ENCODE measurements at regions of chr3 and their contacts with region 1.

Region 1: DNA sequence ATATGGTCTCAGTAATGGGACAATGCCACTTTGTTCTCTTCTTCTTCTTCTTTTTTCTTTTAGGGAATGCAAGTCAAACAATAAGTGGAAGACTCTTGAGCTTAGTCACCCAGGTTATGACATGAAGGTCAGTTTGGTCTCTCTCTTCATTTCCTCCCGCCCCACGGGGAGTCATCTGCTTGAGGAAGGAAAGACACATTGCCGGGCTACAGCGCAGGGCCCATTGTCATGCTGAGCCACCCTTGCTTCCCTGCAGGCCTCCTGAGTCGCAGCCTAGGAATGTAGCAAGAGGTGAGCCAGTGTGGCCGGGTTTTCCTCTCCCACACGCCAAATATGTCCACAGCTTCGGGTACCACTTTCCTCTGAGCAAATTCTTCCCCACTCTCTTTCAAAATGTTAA is 47.6 kb downstream of the RAP2B start:
- H3K4me3 Mint-ChIP-seq: no peak overlapping the region
- H3K27ac Mint-ChIP-seq: peak overlapping the region; percentile 33
- H3K4me1 Mint-ChIP-seq: peaks cover 26% of the 10 kb centered on the region
- H3K27me3 Mint-ChIP-seq: no peaks in the 10 kb centered on the region

Region 2: DNA sequence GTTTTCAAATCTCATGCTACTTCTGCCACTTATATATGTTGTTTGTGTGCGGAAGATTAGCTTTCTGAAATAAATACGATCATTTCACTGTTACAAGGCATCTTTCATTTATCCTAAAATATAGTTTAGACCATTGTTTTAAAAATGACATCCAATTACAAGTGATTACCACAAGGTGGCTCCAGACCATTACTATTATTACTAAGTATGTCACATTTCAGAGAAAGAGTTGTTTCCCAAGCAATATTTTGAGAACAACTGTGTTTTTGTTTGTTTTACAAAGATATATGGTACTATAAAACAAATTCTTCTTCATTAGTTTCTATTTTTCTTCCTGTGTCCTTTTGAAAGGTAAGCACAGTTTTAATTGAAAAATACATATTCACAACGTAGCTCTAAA is 183.6 kb before region 1 on chr3:
- intact Hi-C with region 1: no loop called
- H3K4me3 Mint-ChIP-seq: no peak overlapping the region
- H3K27ac Mint-ChIP-seq: no peak overlapping the region
- H3K4me1 Mint-ChIP-seq: peaks cover 32% of the 10 kb centered on the region
- H3K27me3 Mint-ChIP-seq: no peaks in the 10 kb centered on the region

Region 3: GRCh38 chr3:153252963-153253362 is 43.4 kb after region 1 on chr3:
- intact Hi-C with region 1: loop called (anchors 5 kb)
- H3K4me3 Mint-ChIP-seq: no peak overlapping the region
- H3K27ac Mint-ChIP-seq: no peak overlapping the region
- H3K4me1 Mint-ChIP-seq: peaks cover 51% of the 10 kb centered on the region
- H3K27me3 Mint-ChIP-seq: no peaks in the 10 kb centered on the region

Region 4: GRCh38 chr3:153357436-153357835 is 147.8 kb after region 1 on chr3:
- intact Hi-C with region 1: no loop called
- H3K4me3 Mint-ChIP-seq: no peak overlapping the region
- H3K27ac Mint-ChIP-seq: no peak overlapping the region
- H3K4me1 Mint-ChIP-seq: peaks cover 5% of the 10 kb centered on the region
- H3K27me3 Mint-ChIP-seq: no peaks in the 10 kb centered on the region